ENCODE measurements at regions of chr22 and their contacts with region 1.

Region 1: GRCh38 chr22:23144932-23145873 is at the start of gene RAB36:
- DNase-seq: peak; percentile 91 to 98 (median 93)
- H3K4me3 ChIP-seq: peak within 1 kb of the TSS in 1 of 2 donors; percentile 38
- H3K4me3 Mint-ChIP-seq: peak within 1 kb of the TSS; percentile 80 to 90 (median 83)
- H3K27ac ChIP-seq: peak within 1 kb of the TSS; percentile 73
- H3K27ac Mint-ChIP-seq: peak within 1 kb of the TSS; percentile 96 to 99 (median 98)
- H3K4me1 ChIP-seq: peaks cover 52% of the 10 kb centered on the region
- H3K4me1 Mint-ChIP-seq: peaks cover 29 to 64% (median 45%) of the 10 kb centered on the region in 4 donors
- H3K27me3 ChIP-seq: no peaks in the 10 kb centered on the region
- H3K27me3 Mint-ChIP-seq: no peaks in the 10 kb centered on the region
- total RNA-seq, gene RAB36: 0.33 to 0.64 TPM

Region 2: DNA sequence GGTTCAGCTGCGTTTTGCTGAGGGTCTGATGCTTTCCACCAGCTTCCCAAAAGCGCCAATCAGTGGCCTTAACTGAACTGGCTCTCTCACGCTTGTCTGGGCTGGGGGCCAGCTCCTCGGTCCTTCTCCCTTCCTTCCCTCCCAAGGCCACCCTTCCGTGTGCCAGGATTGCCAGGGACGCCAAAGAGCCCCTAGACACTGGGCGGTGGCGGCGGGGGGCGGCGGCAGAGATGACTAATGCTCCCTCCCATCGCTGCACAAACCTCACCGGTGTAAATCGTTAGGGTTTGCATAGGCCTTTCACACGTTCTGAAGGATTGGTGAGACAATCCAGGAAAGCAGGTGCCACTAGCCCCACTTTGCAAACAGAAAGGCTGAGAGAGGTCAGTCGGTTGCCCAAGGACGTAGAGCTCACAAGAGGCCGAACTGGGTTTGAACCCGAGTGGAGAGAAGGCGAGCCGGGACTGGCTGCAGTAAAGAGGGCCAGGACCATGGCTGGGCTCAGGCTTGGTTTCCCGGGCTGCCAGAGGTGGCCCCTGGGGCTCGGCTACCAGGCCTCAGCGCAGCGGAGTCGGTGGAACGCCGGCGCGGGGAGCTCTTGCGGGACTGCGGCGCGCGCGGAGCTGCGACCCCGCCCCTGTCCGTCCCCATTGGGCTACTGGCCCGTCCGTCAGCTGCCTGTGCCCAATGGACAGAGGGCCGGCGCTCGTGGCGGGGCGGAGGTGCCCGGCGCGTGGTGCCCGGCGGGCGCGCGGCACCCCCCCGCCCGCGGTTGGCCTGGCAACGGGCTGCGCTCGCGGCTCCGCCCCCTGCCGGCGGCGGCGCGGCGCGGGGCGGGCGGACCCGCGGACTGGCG is 75.5 kb before region 1 on chr22:
- CTCF ChIA-PET with region 1: no interaction called
- POLR2A ChIA-PET with region 1: interaction called, 5 read pairs
- intact Hi-C with region 1: loop called (anchors 2 kb)
- DNase-seq: peak; percentile 88 to 91 (median 89)
- H3K4me3 ChIP-seq: peak overlapping the region in 1 of 2 donors; percentile 48
- H3K4me3 Mint-ChIP-seq: peak overlapping the region; percentile 81 to 95 (median 86)
- H3K27ac ChIP-seq: peak overlapping the region; percentile 52
- H3K27ac Mint-ChIP-seq: peak overlapping the region; percentile 52 to 91 (median 87)
- H3K4me1 ChIP-seq: peaks cover 11% of the 10 kb centered on the region
- H3K4me1 Mint-ChIP-seq: peaks cover 4 to 23% (median 9%) of the 10 kb centered on the region in 4 donors
- H3K27me3 ChIP-seq: peaks cover 3% of the 10 kb centered on the region
- H3K27me3 Mint-ChIP-seq: peaks cover 0 to 2% of the 10 kb centered on the region in 2 donors

Region 3: DNA sequence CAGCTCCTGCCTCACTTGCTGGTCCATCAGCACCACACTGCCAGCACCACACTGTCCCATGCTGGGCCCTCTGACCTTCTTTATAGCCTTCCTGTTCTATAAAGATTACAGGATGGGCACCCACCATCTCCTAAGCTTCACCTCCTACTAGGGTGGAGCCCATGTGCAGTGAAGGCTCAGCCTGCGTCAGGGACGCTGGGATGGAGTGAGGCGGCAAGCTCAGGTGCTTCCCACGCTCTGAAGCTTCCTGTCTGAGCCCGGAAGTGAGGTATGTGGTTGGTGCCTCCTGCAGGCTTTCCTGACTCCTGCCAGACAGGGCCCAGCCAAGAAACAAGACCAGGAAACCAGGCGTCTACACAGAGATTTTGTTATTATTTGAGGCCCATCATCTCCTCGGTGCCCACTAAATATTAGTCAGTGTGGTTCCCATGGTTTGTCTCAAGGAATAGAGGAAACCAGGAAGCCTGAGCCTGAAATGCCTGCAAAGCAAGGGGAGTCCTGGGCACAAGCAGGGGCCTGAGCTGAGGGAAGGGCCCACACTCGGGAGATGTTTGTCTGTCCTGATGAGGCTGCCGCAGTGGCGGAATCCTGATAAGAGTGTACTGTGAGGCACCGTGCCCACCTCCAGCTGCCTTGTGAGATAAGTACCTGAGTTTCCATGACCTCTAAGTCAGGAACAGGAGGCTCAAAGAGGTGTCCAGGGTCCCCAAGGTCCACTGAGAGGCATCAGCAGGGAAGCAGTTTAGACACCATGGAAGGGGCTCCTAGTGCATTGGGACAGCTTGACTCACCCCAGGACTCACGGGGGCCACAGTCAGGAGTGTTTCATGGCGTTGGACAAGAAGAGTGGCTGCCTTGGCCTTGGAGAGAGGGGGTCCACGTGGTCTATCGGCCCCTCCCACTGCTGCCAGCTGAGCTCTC is 25.4 kb before region 1 on chr22:
- CTCF ChIA-PET with region 1: interaction called, 3 read pairs
- POLR2A ChIA-PET with region 1: interaction called, 16 read pairs
- intact Hi-C with region 1: no loop called
- DNase-seq: peak; percentile 66 to 81 (median 71)
- H3K4me3 ChIP-seq: no peak overlapping the region
- H3K4me3 Mint-ChIP-seq: peak overlapping the region; percentile 58 to 86 (median 67)
- H3K27ac ChIP-seq: peak overlapping the region; percentile 51
- H3K27ac Mint-ChIP-seq: peak overlapping the region; percentile 89 to 99 (median 98)
- H3K4me1 ChIP-seq: peaks cover 16% of the 10 kb centered on the region
- H3K4me1 Mint-ChIP-seq: peaks cover 8 to 24% (median 16%) of the 10 kb centered on the region in 4 donors
- H3K27me3 ChIP-seq: no peaks in the 10 kb centered on the region
- H3K27me3 Mint-ChIP-seq: no peaks in the 10 kb centered on the region

Region 4: DNA sequence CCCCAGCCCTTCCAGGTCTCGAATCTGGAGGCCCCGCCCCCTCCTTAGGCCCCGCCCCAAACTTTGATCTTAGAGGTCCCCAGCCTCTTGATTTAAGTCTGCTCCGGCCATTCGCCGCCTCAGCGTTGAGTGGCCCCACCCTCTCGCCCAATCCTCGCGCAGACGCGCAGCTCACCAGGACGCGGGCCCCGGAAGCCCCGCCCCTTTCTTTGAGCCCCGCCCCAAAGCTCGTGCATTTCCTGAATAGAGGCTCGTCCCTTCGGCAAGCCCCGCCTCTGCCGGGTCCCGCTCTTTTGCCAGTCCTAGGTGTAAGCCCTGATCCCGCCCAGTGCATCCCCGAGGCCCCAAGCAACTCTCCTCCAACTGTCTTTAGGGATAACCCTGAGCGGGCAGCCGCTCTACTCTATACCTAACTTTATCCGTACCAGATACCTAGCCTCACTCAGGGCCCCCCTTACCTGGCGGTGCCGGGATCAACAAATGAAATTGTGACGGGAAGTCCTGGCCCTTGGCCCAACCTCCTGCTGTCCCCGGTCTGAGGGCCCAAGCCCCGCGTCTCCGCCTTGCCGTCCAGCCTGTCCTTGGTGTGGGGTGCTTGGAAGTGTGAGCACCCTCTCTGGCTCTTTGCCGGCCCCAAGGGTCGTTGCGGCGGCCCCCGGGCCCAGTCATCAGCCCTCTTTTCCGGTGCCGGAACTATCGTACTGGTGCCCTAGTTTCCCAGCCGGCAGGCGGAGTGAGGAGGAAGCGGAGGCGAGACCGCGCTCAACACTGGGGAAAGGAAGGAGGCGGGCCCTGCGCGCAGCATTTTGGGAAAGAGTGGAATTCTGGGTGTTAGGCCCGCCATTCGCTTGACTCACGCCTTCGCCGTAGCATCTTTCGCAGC is 1410.2 kb after region 1 on chr22 and contains the start of gene SNRPD3:
- CTCF ChIA-PET with region 1: no interaction called
- POLR2A ChIA-PET with region 1: no interaction called
- intact Hi-C with region 1: loop called (anchors 10 kb)
- DNase-seq: peak; percentile 96 to 100 (median 98)
- H3K4me3 ChIP-seq: peak within 1 kb of the TSS; percentile 76 to 100
- H3K4me3 Mint-ChIP-seq: peak within 1 kb of the TSS; percentile 97 to 99 (median 98)
- H3K27ac ChIP-seq: peak within 1 kb of the TSS; percentile 87
- H3K27ac Mint-ChIP-seq: peak within 1 kb of the TSS; percentile 95 to 99 (median 99)
- H3K4me1 ChIP-seq: peaks cover 52% of the 10 kb centered on the region
- H3K4me1 Mint-ChIP-seq: peaks cover 48 to 72% (median 59%) of the 10 kb centered on the region in 4 donors
- H3K27me3 ChIP-seq: no peaks in the 10 kb centered on the region
- H3K27me3 Mint-ChIP-seq: no peaks in the 10 kb centered on the region
- total RNA-seq, gene SNRPD3: 77.6 to 85.0 TPM

Measured in CD4-positive, alpha-beta memory T cell (primary cell).